Activated CD4-positive, alpha-beta T cell treated with anti-CD3 and anti-CD28 coated beads for 36 hours (primary cell): ENCODE measurements at regions of chr19 and their contacts with region 1.

Region 1: DNA sequence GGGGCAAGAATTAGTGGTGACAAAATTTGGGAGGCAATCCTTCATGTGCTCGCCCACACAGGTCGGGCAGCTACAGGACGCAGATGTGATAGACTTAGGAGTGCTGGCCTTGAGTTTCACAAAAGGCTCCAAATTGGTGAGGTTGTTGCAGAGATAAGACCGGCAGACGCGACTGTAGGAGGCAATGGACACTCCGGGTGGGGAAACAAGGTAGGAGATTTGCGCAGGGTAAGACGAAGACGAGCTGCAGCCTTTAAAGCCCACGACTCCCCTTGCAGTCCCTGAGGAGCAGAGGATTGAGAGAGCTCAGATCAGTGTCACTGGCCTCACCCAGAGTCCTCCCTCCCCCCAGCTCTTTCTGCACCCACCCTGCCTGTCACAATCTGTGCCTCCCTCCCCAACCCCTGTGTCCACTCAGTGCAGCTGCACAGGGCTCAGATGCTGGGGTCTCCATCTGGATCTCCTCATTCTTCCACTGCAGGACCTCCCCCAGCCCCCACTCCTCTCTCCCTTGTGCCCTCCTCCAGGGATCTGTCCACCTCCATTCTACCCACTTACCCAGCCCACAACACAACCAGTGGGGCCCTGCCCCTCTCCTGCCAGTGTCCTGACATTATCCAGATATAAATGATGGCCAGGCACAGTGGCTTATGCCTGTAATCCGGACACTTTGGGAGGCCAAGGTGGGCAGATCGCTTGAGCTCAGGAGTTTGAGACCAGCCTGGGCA is 6.3 kb downstream of the LYPD4 start:
- DNase-seq: no peak
- ATAC-seq: no peak
- H3K4me3 Mint-ChIP-seq: no peak overlapping the region
- H3K27ac Mint-ChIP-seq: no peak overlapping the region
- H3K4me1 Mint-ChIP-seq: no peaks in the 10 kb centered on the region
- H3K27me3 Mint-ChIP-seq: peaks cover 19% of the 10 kb centered on the region

Region 2: GRCh38 chr19:41821003-41821735 is 17.0 kb before region 1 on chr19:
- CTCF ChIA-PET with region 1: interaction called, 14 read pairs
- POLR2A ChIA-PET with region 1: no interaction called
- intact Hi-C with region 1: no loop called
- DNase-seq: peak; percentile 67
- ATAC-seq: peak; percentile 90
- H3K4me3 Mint-ChIP-seq: no peak overlapping the region
- H3K27ac Mint-ChIP-seq: no peak overlapping the region
- H3K4me1 Mint-ChIP-seq: no peaks in the 10 kb centered on the region
- H3K27me3 Mint-ChIP-seq: peaks cover 10% of the 10 kb centered on the region

Region 3: GRCh38 chr19:41853344-41854167 is 15.4 kb after region 1 on chr19:
- CTCF ChIA-PET with region 1: interaction called, 26 read pairs
- POLR2A ChIA-PET with region 1: no interaction called
- intact Hi-C with region 1: no loop called
- DNase-seq: no peak
- ATAC-seq: no peak
- H3K4me3 Mint-ChIP-seq: no peak overlapping the region
- H3K27ac Mint-ChIP-seq: no peak overlapping the region
- H3K4me1 Mint-ChIP-seq: peaks cover 6% of the 10 kb centered on the region
- H3K27me3 Mint-ChIP-seq: peaks cover 4% of the 10 kb centered on the region